ENCODE measurements at regions of chr11 and their contacts with region 1.

Region 1: GRCh38 chr11:6389921-6390724 is at the start of gene SMPD1:
- DNase-seq: peak; percentile 97
- ATAC-seq: peak; percentile 98
- total RNA-seq, gene SMPD1: 60.9 TPM

Region 2: GRCh38 chr11:6586434-6587359 is 196.6 kb after region 1 on chr11:
- intact Hi-C with region 1: no loop called
- DNase-seq: peak; percentile 71
- ATAC-seq: peak; percentile 89

Region 3: GRCh38 chr11:6705905-6706535 is 315.9 kb after region 1 on chr11:
- intact Hi-C with region 1: loop called (anchors 10 kb)
- DNase-seq: no peak
- ATAC-seq: peak; percentile 60